ENCODE measurements at regions of chr7 and their contacts with region 1.

Region 1: DNA sequence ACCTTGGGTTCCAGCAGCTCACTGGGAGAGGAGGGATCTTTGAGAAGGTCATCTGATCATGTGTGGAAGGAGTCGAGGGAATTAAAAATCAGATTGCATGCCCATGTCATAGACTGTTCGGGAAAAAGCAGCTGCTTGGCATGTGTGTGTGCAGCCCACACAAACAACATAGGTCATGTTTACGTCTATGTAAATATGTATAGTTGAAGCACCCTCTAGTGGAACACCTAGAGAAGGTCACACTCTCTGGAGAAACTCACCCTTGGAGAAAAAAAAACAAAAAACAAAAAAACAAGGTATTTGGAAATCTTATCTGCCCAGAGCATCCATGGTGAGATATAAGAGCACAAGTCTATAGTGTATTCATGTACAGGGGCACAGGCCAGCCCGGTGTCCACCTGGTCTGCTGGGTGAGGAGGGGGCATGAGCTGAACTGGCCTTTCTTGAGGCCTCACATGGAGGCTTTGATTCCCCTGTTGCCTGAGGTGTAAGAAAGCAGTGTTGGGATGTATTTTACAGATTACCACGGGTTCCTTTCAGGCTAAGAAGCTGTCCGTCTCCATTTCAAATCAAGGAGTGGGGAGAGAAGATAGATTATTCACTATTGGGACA is 98.0 kb downstream of the NPY start:
- DNase-seq: peak; percentile 40
- H3K4me3 Mint-ChIP-seq: no peak overlapping the region
- H3K27ac Mint-ChIP-seq: no peak overlapping the region
- H3K4me1 Mint-ChIP-seq: peaks cover 22% of the 10 kb centered on the region
- H3K27me3 Mint-ChIP-seq: no peaks in the 10 kb centered on the region
- CTCF ChIP-seq: peak; percentile 60

Region 2: DNA sequence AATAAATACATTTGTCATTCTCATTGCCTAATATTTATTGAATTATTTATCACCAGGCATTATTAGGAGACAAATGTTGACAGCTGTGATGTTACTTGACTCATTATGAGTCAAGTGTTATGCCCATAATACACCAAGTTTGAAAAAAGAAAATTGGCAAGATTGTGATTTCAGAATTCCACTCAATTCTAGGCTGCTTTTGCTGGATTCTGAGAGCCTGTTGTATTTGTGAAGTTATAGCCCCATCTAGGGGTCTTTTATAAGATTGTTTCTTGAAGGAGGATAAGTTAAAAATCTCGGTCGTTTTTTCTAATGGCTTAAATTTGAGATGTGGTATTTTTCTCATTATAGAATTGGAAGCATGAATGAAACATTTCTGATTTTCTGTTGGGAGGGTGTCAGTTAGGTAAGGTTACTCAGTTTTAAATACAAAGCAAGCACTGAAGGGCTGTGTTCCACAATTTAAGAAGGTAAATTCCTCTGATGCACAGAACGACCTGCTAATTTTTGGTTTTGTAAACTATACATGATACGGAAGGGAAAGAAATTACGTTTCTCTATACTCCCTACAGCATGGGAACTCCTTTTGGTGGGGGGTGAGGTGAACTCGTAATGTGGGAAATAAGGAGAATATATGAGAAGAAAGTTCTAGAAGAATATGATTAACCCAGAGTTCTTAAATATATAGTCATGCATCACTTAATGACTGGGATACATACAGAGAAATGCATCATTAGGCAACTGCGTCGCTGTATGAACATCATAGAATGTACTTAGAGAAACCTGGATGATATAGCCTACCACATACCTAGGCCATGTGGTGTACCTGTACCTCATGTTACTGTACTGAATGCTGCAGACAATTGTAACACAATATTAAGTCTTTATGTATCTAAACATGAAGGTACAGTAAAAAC is 669.4 kb before region 1 on chr7:
- CTCF ChIA-PET with region 1: no interaction called
- POLR2A ChIA-PET with region 1: interaction called, 3 read pairs
- intact Hi-C with region 1: loop called (anchors 5 kb)
- DNase-seq: peak; percentile 69
- H3K4me3 Mint-ChIP-seq: no peak overlapping the region
- H3K27ac Mint-ChIP-seq: peak overlapping the region; percentile 27
- H3K4me1 Mint-ChIP-seq: peaks cover 17% of the 10 kb centered on the region
- H3K27me3 Mint-ChIP-seq: no peaks in the 10 kb centered on the region
- CTCF ChIP-seq: peak; percentile 52

Region 3: DNA sequence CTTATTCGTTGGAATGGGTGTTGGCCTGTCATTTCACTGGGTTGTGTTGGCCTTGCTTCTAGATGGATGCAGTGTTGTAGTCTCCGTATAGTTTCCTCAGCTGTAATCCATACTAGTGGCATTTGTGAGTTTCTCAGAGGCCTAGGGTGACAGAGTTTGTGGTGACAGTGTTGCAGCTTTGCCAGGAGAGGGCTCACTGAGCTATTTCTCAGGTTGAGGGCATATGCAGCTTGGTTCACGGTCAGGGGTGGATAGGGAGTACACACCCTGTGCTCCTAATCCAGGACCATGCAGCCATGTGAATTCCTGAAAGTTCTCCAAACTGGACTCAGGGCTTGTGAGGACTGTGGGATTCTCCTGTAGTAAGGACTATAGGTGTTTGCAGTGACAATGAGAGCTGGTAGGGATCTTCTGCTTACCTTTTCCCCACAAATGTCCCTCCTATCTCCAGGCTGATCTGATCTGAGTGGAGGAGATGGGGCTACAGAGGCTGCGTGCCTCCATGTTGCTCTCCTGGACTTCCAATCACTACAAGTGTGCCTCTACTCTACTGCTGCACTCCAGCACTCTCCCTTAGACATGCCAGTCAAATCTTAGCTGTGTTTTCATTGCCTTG is 443.0 kb before region 1 on chr7:
- CTCF ChIA-PET with region 1: interaction called, 31 read pairs
- POLR2A ChIA-PET with region 1: interaction called, 4 read pairs
- intact Hi-C with region 1: loop called (anchors 1 kb)
- DNase-seq: peak; percentile 59
- H3K4me3 Mint-ChIP-seq: no peak overlapping the region
- H3K27ac Mint-ChIP-seq: no peak overlapping the region
- H3K4me1 Mint-ChIP-seq: no peaks in the 10 kb centered on the region
- H3K27me3 Mint-ChIP-seq: no peaks in the 10 kb centered on the region
- CTCF ChIP-seq: peak; percentile 37

Region 4: GRCh38 chr7:24299192-24299591 is 82.8 kb before region 1 on chr7:
- CTCF ChIA-PET with region 1: interaction called, 10 read pairs
- POLR2A ChIA-PET with region 1: no interaction called
- intact Hi-C with region 1: no loop called
- DNase-seq: no peak
- H3K4me3 Mint-ChIP-seq: no peak overlapping the region
- H3K27ac Mint-ChIP-seq: no peak overlapping the region
- H3K4me1 Mint-ChIP-seq: no peaks in the 10 kb centered on the region
- H3K27me3 Mint-ChIP-seq: no peaks in the 10 kb centered on the region
- CTCF ChIP-seq: no peak

Measured in MCF 10A (cell line).